ENCODE measurements at regions of chr19 and their contacts with region 1.

Region 1: GRCh38 chr19:20565321-20566018 is at the start of gene ZNF737:
- DNase-seq: peak; percentile 73
- H3K27ac ChIP-seq: peak within 1 kb of the TSS; percentile 83
- CTCF ChIP-seq: no peak

Region 2: DNA sequence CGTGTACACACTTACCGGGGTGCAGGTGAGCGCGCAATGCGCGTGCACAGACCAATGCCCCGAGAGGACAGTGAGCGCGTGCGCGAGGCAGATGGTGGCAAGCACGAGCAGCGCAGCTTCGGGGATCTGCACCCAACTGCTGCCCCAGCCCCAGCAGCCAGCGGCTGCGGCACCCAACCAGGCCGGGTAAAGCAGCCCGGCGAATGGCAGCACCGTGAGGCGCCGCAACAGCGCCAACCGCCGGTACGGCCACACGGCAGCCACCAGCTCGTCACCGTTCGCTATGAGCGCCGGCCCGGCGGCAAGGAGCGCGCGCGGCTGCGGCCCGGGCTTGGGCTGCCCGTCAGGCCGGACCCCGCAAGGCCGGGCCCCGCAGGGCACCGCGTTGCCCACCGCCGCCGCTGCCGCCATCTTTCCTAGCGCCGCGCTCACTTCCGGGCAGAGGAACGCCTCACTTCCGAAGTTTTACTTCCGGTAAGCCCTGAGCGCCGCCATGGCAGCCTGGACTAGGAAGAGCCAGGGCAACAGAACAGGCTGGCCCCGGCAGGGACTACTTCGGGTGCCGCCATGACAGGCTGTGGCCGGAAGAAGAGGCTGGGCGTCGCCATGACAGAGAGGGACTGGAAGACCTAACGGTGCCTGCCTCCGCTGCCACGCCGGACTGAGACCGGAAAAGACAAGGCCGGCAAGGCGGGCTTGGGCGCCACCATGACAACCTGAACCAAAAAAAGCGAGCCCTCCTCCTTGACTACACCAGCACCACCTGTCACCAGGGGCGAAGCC is 902.0 kb before region 1 on chr19 and contains the start of gene ATP13A1:
- CTCF ChIA-PET with region 1: no interaction called
- POLR2A ChIA-PET with region 1: interaction called, 10 read pairs
- DNase-seq: peak; percentile 89
- H3K27ac ChIP-seq: peak within 1 kb of the TSS; percentile 93
- CTCF ChIP-seq: no peak; the same call in 1 of the 2 replicates

Region 3: DNA sequence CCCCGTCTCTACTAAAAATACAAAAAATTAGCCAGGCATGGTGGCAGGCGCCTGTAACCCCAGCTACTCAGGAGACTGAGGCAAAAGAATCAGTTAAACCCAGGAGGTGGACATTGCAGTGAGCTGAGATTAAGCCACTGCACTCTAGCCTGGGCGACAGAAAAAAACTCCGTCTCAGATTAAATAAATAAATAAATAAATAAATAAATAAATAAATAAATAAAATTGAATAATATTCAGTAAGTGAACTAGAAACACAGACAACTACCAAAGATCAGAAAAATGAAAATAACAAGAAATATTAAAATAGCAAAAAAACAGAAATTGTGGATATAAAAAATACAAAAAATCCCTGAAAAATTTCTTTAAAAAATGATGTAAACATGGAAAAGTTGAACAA is 226.0 kb before region 1 on chr19:
- CTCF ChIA-PET with region 1: no interaction called
- POLR2A ChIA-PET with region 1: no interaction called
- DNase-seq: no peak
- H3K27ac ChIP-seq: no peak overlapping the region
- CTCF ChIP-seq: no peak

Measured in RWPE1 (cell line).